Right ventricle myocardium inferior (tissue), 1 donor: ENCODE measurements at regions of chr5 and their contacts with region 1.

Region 1: DNA sequence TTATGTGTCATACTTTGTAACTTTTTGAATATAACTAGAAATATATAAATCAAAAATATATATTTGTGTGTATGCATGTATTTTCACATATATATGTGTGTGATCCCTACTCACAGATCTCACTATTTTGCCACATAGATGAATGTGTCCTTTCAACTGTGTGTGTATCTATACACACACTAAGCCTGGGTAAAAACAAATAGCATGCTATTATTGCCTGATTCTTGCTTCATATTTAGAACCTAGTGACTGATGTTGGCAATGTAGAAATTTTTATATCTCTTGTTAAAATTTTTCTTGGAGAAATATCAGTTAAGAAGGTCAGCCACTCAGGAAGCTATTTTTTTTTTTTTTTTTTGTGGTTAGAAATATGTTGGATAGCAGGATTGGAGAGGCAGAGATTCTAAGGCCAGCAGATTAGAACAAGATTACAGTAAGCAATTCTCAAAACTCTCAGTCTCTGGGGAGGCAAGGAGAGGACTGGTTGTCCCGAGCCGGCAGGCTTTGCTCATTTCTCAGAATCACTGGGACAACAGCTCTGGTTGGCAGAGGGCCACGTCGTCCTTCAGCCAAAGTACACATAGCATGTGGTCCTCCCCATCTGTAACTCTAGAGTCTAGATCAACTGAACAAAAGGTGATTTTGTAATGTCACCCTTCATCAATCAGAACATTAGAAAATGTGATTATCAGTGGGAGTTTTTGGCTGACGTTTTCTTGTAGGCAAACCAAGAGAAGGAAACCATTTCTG is 19.7 kb downstream of the C6 start:
- DNase-seq: peak; percentile 98
- ATAC-seq: peak; percentile 96

Region 2: DNA sequence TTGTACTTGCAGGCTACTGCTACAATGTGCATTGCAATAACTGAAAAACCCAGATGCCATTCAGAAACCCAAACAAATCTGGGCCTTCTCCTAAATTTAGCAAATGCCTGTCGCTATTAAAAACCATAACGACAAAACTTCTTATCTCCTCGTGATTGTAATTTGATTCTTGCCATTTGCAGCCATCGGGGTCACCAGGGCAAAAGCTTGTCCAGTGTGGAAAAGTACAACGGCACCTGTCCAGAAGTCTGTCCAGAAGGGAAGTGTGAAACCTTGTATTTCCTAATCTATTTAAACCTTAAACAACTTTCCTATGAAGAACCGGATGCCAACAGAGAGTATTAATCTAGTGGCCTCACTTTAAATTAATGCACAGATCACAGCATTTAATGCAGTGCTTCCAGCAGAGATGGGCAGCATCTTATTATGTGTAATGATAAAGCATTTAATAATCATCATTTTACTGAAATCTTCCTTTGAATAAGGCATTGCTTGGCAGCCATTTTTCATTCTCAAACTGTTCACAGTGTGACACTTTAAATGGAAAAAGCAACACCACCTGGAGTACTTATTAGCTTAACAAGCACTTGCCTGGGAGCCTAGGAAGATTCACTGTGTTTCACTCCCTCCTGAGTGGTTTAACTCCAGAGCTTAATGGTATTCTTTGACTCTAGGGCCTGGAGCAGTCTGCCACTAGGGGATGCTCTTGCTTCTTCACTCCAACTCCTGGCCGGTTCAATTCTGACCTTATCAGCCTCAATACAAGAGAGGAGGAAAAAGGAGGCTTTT is 289.2 kb before region 1 on chr5:
- intact Hi-C with region 1: loop called (anchors 5 kb)
- DNase-seq: no peak
- ATAC-seq: peak; percentile 93

Region 3: DNA sequence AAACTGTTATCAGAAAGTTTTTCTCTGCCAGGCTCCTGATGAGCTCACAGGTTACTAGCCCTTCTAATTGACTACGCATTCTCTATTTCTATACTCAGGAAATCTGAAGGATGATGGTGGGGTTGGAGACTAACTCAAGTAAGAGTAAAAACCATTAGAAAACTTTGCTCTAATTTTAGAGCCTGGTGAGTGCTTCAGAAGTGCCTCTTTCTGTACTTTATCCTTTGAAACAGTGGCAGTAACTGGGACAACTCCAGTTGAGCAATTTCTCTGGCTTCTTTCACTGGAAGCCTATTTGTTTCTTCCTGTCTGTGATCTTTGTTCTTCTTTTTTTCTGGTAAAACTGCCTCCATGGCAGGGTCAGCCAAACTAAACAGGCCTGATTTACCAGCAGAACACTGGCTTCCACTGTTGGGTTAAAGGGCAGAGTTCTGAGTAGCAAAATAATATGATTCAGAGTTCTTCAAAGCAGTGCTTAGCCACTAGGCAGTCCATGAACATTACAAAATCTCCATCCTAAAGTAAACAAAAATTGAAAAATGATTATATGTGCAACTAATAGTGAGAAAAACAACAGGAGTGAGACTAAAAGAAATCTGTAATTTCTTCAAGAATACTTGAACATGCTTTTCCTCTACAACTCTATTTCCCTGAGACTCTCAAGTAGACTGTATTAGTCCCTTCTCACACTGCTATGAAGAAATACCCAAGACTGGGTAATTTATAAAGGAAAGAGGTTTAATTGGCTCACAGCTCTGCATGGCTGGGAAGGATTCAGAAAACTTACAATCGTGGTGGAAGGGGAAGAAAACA is 202.3 kb before region 1 on chr5:
- intact Hi-C with region 1: loop called (anchors 2 kb)
- DNase-seq: peak; percentile 60
- ATAC-seq: peak; percentile 91

Region 4: GRCh38 chr5:41102341-41102740 is 91.3 kb before region 1 on chr5:
- intact Hi-C with region 1: no loop called
- DNase-seq: no peak
- ATAC-seq: no peak

Region 5: GRCh38 chr5:41264019-41264418 is 70.4 kb after region 1 on chr5:
- intact Hi-C with region 1: loop called (anchors 5 kb)
- DNase-seq: no peak
- ATAC-seq: peak; percentile 86

Region 6: GRCh38 chr5:41334758-41335157 is 141.1 kb after region 1 on chr5:
- intact Hi-C with region 1: loop called (anchors 10 kb)
- DNase-seq: peak; percentile 68
- ATAC-seq: peak; percentile 86

Region 7: DNA sequence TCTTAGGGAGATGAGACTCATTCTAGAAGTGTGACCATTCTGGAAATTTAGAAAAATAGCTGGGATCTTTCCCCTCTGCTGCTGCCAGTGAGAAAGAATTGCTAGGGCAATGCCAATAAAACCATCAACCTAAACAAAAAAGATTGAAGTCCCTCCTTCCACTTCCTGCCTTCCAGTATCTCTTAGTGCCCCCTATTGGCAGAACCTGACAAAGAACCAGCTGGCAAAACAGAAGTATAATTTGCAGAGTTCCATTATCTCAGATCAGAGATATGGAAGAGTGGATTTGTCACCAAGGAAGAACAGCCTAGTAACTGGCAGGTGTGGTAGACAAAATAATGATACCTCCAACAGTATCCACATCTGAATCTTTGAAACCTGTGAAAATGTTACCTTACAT is 330.5 kb after region 1 on chr5:
- intact Hi-C with region 1: loop called (anchors 5 kb)
- DNase-seq: no peak
- ATAC-seq: no peak